T-cell (primary cell): ENCODE measurements at regions of chr2 and their contacts with region 1.

Region 1: GRCh38 chr2:170928824-170929685 is at the start of gene GORASP2:
- DNase-seq: peak; percentile 93 to 100 (median 98)
- ATAC-seq: peak; percentile 89 to 93 (median 92)
- H3K4me3 ChIP-seq: peak within 1 kb of the TSS; percentile 81 to 91
- H3K4me3 Mint-ChIP-seq: peak within 1 kb of the TSS; percentile 94 to 99 (median 97)
- H3K27ac ChIP-seq: peak within 1 kb of the TSS; percentile 79
- H3K27ac Mint-ChIP-seq: peak within 1 kb of the TSS; percentile 94 to 96
- H3K4me1 ChIP-seq: peaks cover 12 to 25% of the 10 kb centered on the region in 2 experiments
- H3K4me1 Mint-ChIP-seq: peaks cover 47 to 49% (median 48%) of the 10 kb centered on the region in 3 donors
- H3K27me3 ChIP-seq: no peaks in the 10 kb centered on the region
- H3K27me3 Mint-ChIP-seq: no peaks in the 10 kb centered on the region
- total RNA-seq, gene GORASP2: 61.6 to 81.1 (median 71.0) TPM

Region 2: GRCh38 chr2:171416009-171416926 is 487.2 kb after region 1 on chr2:
- CTCF ChIA-PET with region 1: interaction called, 4 to 15 read pairs
- POLR2A ChIA-PET with region 1: no interaction called
- DNase-seq: peak; percentile 48 to 86 (median 72)
- ATAC-seq: peak; percentile 97 to 99 (median 98)
- H3K4me3 ChIP-seq: no peak overlapping the region
- H3K4me3 Mint-ChIP-seq: no peak overlapping the region
- H3K27ac ChIP-seq: peak overlapping the region; percentile 49
- H3K27ac Mint-ChIP-seq: peak overlapping the region in 1 of 2 donors; percentile 25
- H3K4me1 ChIP-seq: peaks cover 0 to 5% of the 10 kb centered on the region in 2 experiments
- H3K4me1 Mint-ChIP-seq: peaks cover 10 to 16% (median 13%) of the 10 kb centered on the region in 3 donors
- H3K27me3 ChIP-seq: no peaks in the 10 kb centered on the region
- H3K27me3 Mint-ChIP-seq: no peaks in the 10 kb centered on the region

Region 3: GRCh38 chr2:171433763-171434670 is 505.0 kb after region 1 on chr2 and contains the starts of genes DCAF17 and METTL8:
- CTCF ChIA-PET with region 1: interaction called in 1 of 2 experiments, 20 read pairs
- POLR2A ChIA-PET with region 1: no interaction called
- DNase-seq: peak; percentile 83 to 96 (median 92)
- ATAC-seq: peak; percentile 93 to 95 (median 94)
- H3K4me3 ChIP-seq: peak within 1 kb of the TSS; percentile 67 to 93
- H3K4me3 Mint-ChIP-seq: peak within 1 kb of the TSS; percentile 79 to 88 (median 84)
- H3K27ac ChIP-seq: peak within 1 kb of the TSS; percentile 96
- H3K27ac Mint-ChIP-seq: peak within 1 kb of the TSS; percentile 95 to 96
- H3K4me1 ChIP-seq: peaks cover 9 to 10% of the 10 kb centered on the region in 2 experiments
- H3K4me1 Mint-ChIP-seq: peaks cover 43 to 50% (median 48%) of the 10 kb centered on the region in 3 donors
- H3K27me3 ChIP-seq: no peaks in the 10 kb centered on the region
- H3K27me3 Mint-ChIP-seq: no peaks in the 10 kb centered on the region
- total RNA-seq, gene DCAF17: 21.1 to 24.6 (median 23.9) TPM
- total RNA-seq, gene METTL8: 12.5 to 18.9 (median 16.3) TPM